ENCODE measurements at regions of chr4 and their contacts with region 1.

Region 1: GRCh38 chr4:150278206-150278605 is 200.0 kb downstream of the DCLK2 start:
- DNase-seq: no peak
- H3K4me3 ChIP-seq: no peak overlapping the region
- CTCF ChIP-seq: no peak

Region 2: DNA sequence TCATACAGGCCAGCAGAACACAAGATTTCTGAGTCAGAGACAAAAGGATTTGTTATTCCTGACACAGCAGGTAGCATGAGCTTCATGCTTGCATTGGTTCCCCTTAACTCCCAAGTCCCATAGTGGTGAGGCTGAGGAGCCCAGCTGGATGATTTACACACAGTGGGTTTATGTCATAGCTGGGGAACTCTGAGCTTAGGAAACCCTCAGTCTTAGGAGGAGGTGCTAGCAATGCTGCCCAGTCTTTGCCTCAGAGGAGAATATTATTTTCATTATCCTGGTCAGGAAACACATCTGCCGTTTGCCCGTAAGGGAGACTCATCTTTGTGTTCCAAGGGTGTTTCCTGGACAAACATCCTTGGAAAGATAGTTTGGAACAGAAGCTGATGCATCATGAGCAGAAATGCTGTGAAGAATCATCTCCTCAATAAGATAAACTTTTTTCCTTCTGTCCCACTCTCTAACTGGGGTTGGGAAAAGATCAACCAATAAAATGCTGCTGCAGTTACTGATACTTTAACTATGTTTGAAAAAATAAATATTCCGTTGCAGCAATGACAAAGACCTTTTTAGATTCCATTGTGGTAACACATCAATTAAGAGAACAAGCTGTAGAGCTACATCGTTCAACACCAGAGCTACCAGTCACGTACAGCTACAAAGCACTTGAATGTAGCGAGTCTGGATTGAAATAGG is 53.2 kb before region 1 on chr4:
- in situ Hi-C with region 1: loop called (anchors 5 kb)
- DNase-seq: peak; percentile 95
- H3K4me3 ChIP-seq: peak overlapping the region; percentile 13
- CTCF ChIP-seq: no peak

Region 3: DNA sequence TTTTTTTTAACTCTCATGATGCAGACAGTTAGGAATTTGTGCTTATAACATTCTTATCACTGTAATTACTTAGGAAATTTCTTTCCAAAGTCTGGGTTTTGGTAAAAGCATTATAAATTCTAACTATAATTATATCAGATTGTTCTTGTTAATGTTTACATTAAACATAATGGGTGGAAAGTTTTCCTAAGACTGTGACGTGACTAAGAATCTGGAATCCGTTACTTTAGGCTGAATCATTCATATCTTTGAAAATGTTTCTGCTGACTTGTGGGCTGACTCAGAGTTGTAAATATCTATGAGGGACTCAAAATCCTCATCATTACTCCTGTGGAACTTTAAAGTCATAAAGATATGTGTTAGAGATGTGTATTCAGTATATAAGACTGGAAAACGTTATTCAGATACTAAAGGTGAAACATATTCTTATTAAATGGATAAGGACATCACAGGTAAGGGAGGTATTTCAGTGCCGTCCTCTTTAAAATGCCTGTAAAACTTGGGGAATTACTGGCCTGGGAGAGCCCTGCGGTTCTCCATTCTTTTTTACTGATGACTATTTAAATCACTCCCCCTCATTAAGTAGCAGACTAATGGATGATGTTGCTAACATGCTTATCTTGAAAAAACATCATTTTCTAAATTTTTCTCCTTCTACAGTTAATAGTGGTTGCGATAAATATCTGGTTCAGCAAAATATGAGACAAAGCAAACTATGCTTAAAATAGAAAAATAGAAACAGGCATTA is 40.9 kb before region 1 on chr4:
- in situ Hi-C with region 1: no loop called
- DNase-seq: peak; percentile 88
- H3K4me3 ChIP-seq: no peak overlapping the region
- CTCF ChIP-seq: no peak

Region 4: GRCh38 chr4:150385606-150386005 is 107.4 kb after region 1 on chr4:
- in situ Hi-C with region 1: no loop called
- DNase-seq: peak; percentile 91
- H3K4me3 ChIP-seq: no peak overlapping the region
- CTCF ChIP-seq: no peak

Region 5: DNA sequence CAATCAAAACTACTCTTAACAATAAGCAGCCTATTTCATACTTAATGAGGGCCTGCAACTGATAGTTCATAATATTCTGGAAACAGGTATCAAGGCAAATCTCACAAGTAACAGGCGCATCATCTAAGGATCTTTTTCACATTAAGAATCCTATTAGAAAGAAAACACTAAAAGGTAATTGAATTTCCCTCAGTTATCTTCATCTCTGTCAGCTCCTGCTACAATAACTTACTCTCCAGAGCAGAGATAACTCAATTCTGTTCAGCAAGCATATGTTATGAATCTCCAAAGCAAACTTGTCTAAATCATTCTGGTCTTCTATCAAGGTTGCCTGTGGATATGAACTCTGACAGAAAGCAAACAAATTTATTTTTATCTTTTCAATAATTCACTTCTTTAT is 429.8 kb after region 1 on chr4:
- in situ Hi-C with region 1: no loop called
- DNase-seq: no peak
- H3K4me3 ChIP-seq: no peak overlapping the region
- CTCF ChIP-seq: no peak

Measured in astrocyte of the cerebellum (primary cell).